RWPE1 (cell line): ENCODE measurements at regions of chr7 and their contacts with region 1.

Region 1: DNA sequence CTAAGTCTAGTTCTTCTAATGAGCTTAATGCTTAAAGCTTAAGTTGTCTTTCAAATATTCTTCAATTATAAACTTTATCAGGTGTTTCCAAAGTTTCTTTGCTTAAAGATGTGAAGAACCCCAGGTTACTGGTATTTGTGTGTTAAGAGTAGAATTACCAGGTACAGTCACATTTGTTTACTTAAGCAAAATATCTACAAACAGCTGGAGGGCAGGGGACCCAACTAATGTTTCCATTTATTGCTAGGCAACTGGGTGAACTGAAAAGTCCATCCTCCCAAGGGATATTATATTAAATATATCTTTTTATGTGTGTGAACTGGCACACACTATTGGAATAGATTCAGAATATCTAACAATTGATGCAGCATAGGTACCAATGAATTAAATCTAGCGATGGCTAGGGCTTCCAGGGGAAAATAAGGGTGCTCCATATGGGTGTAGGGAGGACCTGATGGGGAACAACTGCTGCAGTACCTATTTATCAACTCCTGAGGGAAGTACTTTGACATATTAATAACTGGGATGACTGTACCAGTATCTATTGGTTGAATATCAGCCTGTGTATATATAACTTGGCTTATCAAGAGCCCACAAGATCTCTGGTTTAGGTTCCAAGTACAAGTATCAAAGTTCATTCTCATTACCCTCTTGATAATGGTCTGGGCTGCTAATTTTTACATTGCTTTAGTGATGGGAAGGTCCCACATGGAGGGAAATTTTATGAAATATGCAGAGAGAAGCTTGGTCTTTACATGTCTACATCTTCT is 10.3 kb upstream of the AGR3 start:
- DNase-seq: no peak
- H3K27ac ChIP-seq: no peak overlapping the region
- CTCF ChIP-seq: no peak

Region 2: GRCh38 chr7:16851829-16852228 is 40.2 kb before region 1 on chr7:
- CTCF ChIA-PET with region 1: no interaction called
- POLR2A ChIA-PET with region 1: no interaction called
- DNase-seq: no peak
- H3K27ac ChIP-seq: no peak overlapping the region
- CTCF ChIP-seq: no peak

Region 3: GRCh38 chr7:16918288-16918895 is 26.3 kb after region 1 on chr7:
- CTCF ChIA-PET with region 1: interaction called, 10 read pairs
- POLR2A ChIA-PET with region 1: no interaction called
- DNase-seq: no peak
- H3K27ac ChIP-seq: no peak overlapping the region
- CTCF ChIP-seq: peak; percentile 86